ENCODE measurements at regions of chr2 and their contacts with region 1.

Region 1: DNA sequence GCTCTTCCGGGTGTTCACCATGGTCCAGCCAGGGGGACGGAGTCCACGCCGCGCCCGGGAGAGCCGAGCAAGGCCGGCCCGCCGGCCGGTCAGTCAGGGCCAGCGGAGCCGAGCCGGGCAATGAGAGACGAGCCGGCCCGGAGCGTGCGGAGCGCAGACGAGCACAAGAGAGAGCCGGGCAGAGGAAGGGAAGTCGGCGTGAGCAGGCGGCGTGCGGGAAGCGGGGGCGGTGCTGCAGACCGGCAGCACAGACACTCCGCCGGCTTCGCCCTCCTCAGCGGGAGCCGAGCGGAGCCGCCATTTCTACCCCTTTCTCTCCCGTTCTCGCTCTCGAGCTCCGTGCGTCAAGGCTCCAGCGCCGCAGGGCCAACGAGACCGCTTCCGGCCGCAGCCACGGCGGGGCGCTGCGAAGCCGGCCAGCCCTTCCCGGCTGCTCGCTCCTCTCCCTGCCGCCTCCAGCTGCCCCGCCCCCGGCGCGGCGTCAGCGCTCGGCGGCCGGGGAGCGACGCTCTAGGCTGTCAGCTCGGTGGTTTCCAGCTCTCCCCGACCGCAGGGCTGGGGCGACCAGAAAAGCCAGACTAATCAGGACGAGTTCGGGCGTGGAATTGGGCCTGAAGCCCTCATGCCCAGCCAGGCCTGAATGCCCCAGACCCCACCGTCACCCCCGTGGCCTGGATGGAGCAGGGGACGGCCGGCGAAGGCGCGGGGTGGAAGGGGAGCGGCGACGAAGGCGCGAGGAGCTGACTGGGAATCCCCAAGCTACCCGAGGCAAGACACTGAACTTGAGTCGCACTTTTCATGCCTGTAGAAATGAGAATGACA is at the start of gene ATAD2B:
- DNase-seq: peak; percentile 84 to 99 (median 92)

Region 2: GRCh38 chr2:23813438-23813837 is 113.5 kb before region 1 on chr2:
- intact Hi-C with region 1: no loop called
- DNase-seq: no peak

Region 3: DNA sequence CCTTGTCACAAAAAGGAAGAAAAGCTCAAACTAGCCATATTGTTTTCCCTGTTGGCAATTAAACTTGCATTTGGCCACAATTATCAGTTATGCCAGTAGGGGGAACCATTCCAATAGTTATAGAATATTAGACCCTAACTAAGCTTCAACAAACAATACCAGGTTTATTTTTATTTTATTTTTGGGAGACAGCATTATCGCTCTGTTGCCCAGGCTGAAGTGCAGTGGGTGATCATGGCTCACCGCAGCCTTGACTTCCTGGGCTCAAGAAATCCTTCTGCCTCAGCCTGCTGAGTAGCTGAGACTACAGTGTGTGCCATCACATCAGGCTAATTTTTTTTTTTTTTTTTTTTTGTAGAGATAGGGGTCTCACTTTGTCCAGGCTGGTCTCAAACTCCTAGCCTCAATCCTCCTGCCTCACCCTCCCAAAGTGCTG is 102.2 kb before region 1 on chr2:
- intact Hi-C with region 1: loop called (anchors 10 kb)
- DNase-seq: no peak

Region 4: GRCh38 chr2:23939987-23940717 is 13.2 kb after region 1 on chr2 and contains the start of gene UBXN2A:
- intact Hi-C with region 1: loop called (anchors 1 kb)
- DNase-seq: peak; percentile 51 to 96 (median 69)

Region 5: DNA sequence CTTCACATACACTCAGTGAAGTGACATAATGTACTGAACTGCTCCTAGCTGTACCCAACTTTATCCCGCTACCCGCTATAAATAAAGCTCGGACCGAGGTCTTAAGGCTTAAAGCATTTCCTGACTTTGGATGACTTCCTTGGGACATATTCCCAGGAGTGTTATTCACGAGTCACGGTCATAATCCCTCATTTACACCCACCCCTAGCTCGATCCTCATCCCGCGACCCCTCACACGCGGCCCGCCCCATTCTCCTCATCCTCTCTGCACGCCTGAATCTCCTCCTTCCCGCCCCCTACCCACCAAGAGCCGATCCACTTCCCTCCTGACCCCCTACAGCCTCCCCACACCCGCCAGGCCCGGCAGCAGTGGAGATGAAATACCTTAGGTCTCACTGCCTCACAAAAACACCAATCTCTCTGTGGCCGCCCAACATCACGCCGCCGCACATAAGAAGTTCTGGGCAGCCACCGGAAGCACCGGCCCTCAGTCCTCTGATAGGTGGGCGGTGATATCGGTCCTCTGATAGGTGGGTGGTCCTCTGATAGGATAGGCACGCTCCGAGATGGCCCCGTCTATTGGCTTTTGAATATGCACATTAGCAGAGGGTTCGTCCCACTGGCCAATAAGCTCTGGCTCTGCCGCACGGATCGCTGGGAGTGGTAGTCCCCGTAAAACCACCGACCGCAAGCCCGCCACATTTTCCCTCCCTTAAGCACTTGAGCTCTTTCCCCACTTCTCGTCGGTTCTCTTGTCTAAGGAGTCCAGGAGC is 120.2 kb after region 1 on chr2 and contains the start of gene WDCP:
- intact Hi-C with region 1: loop called (anchors 2 kb)
- DNase-seq: peak; percentile 94 to 99 (median 98)

Region 6: DNA sequence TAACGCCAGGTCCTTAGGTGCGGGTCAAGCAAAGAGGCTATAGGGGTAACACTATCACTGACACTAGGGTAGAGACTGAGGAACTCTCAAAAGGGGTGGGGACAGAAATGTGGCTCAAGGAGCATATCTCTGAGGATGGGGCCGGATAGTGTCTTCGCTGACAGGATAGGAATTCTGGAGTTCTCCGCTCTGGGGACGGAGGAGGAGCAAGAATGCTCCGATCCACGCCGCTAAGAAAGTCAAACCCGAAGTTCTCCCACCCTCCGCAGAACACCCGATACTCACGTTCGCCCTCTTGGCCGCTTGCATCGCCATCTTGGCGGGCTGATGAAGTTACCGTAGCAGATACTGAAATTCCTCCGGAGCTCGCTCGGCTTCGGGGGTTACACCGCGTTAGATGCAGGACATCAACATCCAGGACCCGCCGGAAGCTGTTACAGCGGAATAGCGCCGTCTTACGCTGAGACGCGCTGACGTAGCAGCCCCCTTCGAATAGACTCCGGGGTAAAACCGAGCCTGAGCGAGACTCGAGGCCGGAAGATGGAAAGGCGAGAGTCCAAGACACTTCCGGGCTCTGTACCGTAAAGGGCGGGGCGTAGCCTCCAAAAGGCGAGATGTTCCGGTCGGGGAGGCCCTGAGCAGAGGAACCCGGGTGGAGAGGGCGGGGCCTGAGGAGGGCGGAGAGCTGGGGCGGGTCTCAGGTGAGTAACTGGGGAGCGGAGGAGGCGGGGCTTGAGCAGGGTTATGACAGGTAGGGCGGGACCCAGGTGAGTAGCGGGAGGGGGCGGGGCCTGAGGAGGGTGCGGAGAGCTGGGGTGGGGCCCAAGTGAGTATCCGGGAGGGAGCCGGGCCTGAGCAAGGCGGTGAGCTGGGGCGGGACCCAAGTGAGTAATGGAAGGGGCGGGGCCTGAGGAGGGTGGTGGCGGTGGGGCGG is 149.2 kb after region 1 on chr2 and contains the start of gene SF3B6:
- intact Hi-C with region 1: loop called (anchors 2 kb)
- DNase-seq: peak; percentile 90 to 99 (median 96)

Region 7: DNA sequence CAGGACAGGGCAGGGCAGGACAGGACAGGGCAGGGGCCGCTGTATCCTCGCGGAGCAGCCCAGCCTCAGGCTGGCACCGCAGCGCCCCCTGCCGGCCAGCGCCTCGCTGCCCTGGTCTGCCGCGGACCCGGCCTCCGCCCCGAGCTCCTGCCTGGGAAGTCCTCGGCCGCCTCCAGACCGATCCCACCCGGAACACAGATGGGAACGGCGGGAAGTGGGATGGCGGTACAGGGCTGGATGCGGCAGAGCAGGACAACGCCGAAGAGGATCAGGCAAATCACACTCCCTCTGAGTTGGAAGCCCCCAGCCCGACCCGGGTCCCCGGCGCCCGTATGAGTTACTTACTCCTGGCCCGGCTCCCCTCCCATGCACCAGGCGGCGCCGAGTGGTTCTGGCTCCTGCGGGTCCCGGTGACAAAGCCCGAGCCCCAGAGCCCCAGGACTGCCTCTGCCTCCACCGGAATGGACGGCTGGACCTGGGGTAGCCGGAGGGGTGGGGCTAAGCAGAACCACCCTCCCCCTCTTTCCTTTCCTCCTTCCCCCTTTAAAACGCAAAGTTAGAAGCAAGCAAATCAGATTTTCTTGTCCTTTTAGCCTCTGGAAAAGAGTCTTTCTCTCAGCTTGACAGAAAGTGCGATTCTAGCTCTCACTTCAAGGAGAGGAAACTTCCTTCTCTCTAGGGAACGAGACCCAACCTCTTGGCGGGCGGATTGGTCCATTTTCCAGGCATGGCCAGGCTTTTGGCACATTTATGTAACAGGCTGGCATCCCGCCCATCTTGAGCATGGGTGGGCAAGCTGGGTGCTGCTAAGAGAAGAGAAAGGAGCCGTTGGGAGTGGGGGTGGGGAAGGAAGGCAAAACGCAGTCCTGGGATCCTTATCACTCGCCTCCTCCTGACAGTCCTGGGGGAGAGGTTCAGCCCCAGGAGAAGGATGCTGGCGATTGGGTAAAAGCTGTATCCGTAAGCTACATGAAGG is 157.7 kb after region 1 on chr2 and contains the start of gene TP53I3:
- intact Hi-C with region 1: loop called (anchors 2 kb)
- DNase-seq: peak; percentile 62 to 98 (median 80)

Region 8: GRCh38 chr2:24382363-24383073 is 455.6 kb after region 1 on chr2:
- intact Hi-C with region 1: loop called (anchors 10 kb)
- DNase-seq: peak in 6 of 10 donors; percentile 37 to 92 (median 57)